Activated CD4-positive, alpha-beta T cell treated with anti-CD3 and anti-CD28 coated beads, Interleukin-2, amount 10 ng/mL, durations not matched to agents 24 days and 14 days (primary cell): ENCODE measurements at regions of chr1 and their contacts with region 1.

Region 1: DNA sequence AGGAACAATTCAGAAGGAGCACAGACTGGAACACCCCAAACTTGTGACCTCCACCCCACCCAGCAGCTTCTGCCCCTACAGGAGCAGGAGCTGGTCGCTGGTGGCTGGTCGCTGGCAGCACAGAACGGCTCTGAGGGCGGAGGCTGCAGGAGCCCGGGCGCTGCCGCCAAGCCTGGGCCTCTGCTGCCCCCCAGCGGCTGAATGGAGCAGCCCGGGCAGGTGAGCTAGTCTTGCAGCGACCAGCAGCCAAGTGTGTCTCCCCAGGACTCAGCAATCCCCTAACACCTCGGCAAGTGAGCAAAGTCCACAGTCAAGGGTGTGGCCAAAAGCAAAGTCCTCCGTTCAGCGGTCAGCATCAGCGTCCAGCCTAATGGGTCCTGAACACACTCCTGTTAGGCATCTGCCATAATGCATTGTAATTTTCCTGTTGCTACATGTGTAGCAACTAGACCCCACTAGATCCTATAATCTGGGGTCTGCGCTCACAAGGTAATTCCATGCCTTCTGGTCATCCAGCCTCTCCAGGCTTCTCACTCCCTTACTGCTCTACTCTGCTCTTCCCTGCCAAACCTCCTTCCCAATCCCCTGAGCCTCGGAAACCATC is 12.1 kb upstream of the GJB5 start:
- DNase-seq: peak; percentile 94
- H3K4me3 Mint-ChIP-seq: no peak overlapping the region
- H3K27ac Mint-ChIP-seq: no peak overlapping the region
- H3K4me1 Mint-ChIP-seq: no peaks in the 10 kb centered on the region
- H3K27me3 Mint-ChIP-seq: peaks cover 1% of the 10 kb centered on the region

Region 2: GRCh38 chr1:33633019-33633801 is 1109.6 kb before region 1 on chr1:
- intact Hi-C with region 1: loop called (anchors 5 kb)
- DNase-seq: peak; percentile 95
- H3K4me3 Mint-ChIP-seq: no peak overlapping the region
- H3K27ac Mint-ChIP-seq: no peak overlapping the region
- H3K4me1 Mint-ChIP-seq: no peaks in the 10 kb centered on the region
- H3K27me3 Mint-ChIP-seq: peaks cover 23% of the 10 kb centered on the region

Region 3: DNA sequence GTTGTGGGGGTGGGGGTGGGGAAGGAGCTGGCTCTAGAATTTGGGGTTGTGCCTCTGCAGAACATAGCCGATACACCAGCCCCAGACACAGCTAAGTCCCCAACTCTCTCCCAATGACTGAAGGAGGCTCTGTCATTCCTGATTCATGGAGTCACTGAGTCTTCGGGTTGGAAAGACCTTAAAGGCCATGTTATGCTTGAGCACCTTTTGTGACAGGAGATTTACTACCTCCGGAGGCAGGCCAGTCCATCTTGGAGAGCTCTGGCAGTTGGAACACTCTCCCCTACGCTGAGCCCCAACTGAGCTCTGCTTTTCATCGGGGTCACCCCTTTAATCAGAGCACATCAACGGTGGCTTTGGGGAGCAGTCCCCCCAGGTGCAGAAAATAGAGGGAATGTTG is 272.4 kb before region 1 on chr1:
- intact Hi-C with region 1: loop called (anchors 2 kb)
- DNase-seq: no peak
- H3K4me3 Mint-ChIP-seq: no peak overlapping the region
- H3K27ac Mint-ChIP-seq: no peak overlapping the region
- H3K4me1 Mint-ChIP-seq: no peaks in the 10 kb centered on the region
- H3K27me3 Mint-ChIP-seq: peaks cover 10% of the 10 kb centered on the region